ENCODE measurements at regions of chr10 and their contacts with region 1.

Region 1: DNA sequence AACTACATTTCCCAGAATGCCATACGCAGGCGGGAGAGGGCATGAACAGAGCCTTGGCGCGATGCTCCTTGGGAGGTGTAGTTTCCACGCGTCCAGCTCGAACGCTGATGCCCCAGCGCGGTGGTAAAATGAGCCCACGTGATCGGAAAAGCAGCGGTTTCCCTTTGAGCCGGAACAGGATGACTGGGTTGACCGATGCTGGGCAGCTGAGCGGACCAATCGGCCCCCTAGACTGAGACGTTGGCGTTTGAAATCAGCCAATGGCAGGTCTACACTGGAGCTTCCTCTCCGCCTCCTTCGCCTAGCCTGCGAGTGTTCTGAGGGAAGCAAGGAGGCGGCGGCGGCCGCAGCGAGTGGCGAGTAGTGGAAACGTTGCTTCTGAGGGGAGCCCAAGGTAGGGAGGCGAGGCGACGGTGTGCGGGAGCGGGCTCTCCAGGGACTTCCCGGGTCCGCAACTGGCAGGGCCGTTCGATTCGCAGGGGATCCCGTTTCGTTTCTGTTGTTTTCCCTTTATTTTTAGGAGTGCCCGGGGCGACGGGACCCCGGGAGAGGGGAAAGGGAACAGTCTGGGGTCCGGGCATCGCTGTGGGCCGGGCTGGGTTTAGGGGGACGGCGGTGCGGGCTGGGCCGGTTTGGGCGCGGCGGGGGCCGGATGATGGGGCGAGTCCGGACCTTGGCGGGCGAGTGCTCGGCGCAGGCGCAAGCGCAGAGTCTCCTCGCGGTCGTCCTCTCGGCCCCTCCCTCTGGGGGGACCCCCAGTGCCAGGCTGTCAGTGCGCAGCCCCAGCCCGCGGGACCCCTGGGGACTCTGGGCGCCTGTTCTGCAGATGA is at the start of gene BUB3:
- DNase-seq: peak; percentile 96 to 99
- ATAC-seq: peak; percentile 97 to 100 (median 99)
- H3K4me3 ChIP-seq: peak within 1 kb of the TSS; percentile 64 to 97 (median 85)
- H3K27ac ChIP-seq: peak within 1 kb of the TSS in 9 of 10 donors; percentile 81 to 97 (median 90)
- H3K4me1 ChIP-seq: peaks cover 11 to 74% (median 37%) of the 10 kb centered on the region in 9 donors
- H3K27me3 ChIP-seq: peaks cover 21 to 43% (median 42%) of the 10 kb centered on the region in 7 donors
- CTCF ChIP-seq: peak in 5 of 9 donors; percentile 16 to 57 (median 51)
- total RNA-seq, gene BUB3: 24.4 to 40.9 (median 30.4) TPM

Region 2: DNA sequence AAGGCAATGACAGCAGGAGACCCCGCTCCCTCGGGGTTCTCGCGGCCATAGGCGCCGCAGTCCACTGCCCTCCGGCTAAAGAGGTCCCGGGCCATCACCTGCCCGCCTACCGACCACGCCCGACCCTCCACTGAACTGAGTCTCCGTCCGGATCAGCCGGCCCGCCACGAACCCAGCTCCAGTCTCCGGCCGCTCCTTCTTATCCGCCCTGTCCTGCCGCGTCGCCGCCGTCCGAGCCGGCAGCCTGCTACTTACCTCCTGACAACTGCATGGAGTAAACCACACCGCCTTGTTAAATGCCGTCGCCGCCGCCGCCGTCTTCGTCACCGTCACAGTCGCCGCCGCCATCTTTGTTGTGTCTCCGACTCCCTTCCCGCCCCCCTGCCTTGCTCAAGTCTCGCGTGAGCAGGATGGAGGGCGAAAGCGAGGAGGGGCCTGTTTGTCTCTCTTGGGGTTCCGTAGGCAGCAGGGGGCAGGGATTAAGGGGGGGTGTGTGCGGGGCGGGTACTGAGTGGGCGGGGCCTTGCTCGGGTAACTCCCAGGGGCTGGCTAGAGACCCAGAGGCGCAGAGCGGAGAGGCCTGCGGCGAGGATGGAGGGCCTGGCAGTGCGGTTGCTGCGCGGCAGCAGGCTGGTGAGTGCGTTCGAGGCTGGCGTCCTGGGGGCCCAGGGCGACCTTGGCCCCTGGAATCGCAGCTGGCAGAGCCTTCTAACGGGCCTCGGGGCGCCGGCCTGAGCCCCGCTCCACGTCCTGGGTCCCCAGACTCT is 145.7 kb before region 1 on chr10 and contains the starts of genes ACADSB and IKZF5:
- intact Hi-C with region 1: loop called in 1 of 10 experiments (anchors 10 kb)
- DNase-seq: peak; percentile 94 to 98
- ATAC-seq: peak; percentile 97 to 99 (median 98)
- H3K4me3 ChIP-seq: peak within 1 kb of the TSS; percentile 71 to 97 (median 88)
- H3K27ac ChIP-seq: peak within 1 kb of the TSS; percentile 55 to 96 (median 90)
- H3K4me1 ChIP-seq: peaks cover 4 to 55% (median 42%) of the 10 kb centered on the region in 9 donors
- H3K27me3 ChIP-seq: no peaks in the 10 kb centered on the region
- CTCF ChIP-seq: no peak
- total RNA-seq, gene ACADSB: 54.6 to 114 (median 96.4) TPM
- total RNA-seq, gene IKZF5: 7.8 to 14.4 (median 10.9) TPM

Region 3: DNA sequence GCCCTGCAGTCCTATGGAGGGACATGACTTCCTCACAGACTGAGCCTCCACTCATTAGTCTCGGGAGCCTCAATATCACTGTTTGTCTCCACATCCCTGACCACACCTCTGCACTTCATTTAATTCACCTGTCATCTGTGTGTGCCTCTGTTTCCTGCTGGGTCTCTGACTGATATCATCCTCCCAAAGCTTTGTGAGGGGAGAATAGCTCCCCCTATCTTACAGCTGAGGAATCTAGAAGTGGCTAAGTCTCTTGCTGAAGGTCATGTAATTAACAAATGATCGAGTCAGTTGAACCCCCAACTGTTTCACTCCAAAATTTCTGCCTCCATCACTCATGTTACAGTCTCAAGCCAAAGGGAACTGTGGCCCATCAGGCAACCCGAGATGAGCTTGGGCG is 742.8 kb after region 1 on chr10:
- intact Hi-C with region 1: no loop called
- DNase-seq: no peak
- ATAC-seq: no peak
- H3K4me3 ChIP-seq: no peak overlapping the region
- H3K27ac ChIP-seq: no peak overlapping the region
- H3K4me1 ChIP-seq: no peaks in the 10 kb centered on the region
- H3K27me3 ChIP-seq: peaks cover 0 to 22% (median 8%) of the 10 kb centered on the region in 7 donors
- CTCF ChIP-seq: peak in 3 of 9 donors; percentile 14 to 21 (median 18)